ENCODE measurements at regions of chr2 and their contacts with region 1.

Region 1: GRCh38 chr2:16687955-16688354 is 22.3 kb upstream of the CYRIA start:
- DNase-seq: no peak
- ATAC-seq: peak; percentile 83
- H3K4me3 ChIP-seq: no peak overlapping the region
- H3K27ac ChIP-seq: no peak overlapping the region
- H3K4me1 ChIP-seq: no peaks in the 10 kb centered on the region
- H3K27me3 ChIP-seq: no peaks in the 10 kb centered on the region; a peak in 1 of 4 replicates
- CTCF ChIP-seq: no peak
- EP300 ChIP-seq: no peak
- POLR2A ChIP-seq: no peak
- RAD21 ChIP-seq: no peak

Region 2: DNA sequence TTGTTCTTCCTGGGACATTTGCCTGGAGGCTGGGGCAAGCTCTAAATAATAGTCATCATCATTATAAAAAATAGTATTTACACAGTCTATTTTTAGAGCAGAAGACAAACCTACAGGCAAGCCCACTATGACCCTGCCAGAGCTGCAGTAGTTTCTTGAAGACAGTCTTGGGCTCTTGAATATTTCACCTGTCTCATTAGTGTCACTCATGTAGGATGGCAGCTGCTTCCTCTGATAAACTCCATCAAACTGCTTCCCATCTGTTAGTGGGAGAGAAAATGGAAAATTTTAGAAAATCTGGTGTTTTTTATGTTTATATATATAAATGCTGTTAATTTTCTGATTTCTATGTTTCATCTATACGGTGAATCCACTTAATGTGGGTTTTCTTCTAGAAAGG is 13.8 kb before region 1 on chr2:
- CTCF ChIA-PET with region 1: no interaction called
- POLR2A ChIA-PET with region 1: no interaction called
- RAD21 ChIA-PET with region 1: no interaction called
- SMC1A ChIA-PET with region 1: interaction called, 11 read pairs
- in situ Hi-C with region 1: no loop called
- intact Hi-C with region 1: loop called (anchors 2 kb)
- DNase-seq: no peak
- ATAC-seq: no peak
- H3K4me3 ChIP-seq: no peak overlapping the region
- H3K27ac ChIP-seq: no peak overlapping the region
- H3K4me1 ChIP-seq: no peaks in the 10 kb centered on the region
- H3K27me3 ChIP-seq: no peaks in the 10 kb centered on the region; a peak in 2 of 4 replicates
- CTCF ChIP-seq: no peak
- EP300 ChIP-seq: no peak
- POLR2A ChIP-seq: no peak
- RAD21 ChIP-seq: no peak

Measured in GM12878 (cell line).